Activated CD4-positive, alpha-beta T cell treated with anti-CD3 and anti-CD28 coated beads for 36 hours (primary cell): ENCODE measurements at regions of chr1 and their contacts with region 1.

Region 1: GRCh38 chr1:203267347-203267846 is 37.9 kb upstream of the BTG2 start:
- DNase-seq: peak; percentile 87
- ATAC-seq: peak; percentile 58
- H3K4me3 Mint-ChIP-seq: peak overlapping the region; percentile 79
- H3K27ac Mint-ChIP-seq: peak overlapping the region; percentile 53
- H3K4me1 Mint-ChIP-seq: peaks cover 22% of the 10 kb centered on the region
- H3K27me3 Mint-ChIP-seq: no peaks in the 10 kb centered on the region

Region 2: GRCh38 chr1:203038891-203039608 is 228.3 kb before region 1 on chr1:
- CTCF ChIA-PET with region 1: interaction called, 17 read pairs
- POLR2A ChIA-PET with region 1: no interaction called
- intact Hi-C with region 1: loop called (anchors 1 to 2 kb)
- DNase-seq: peak; percentile 77
- ATAC-seq: peak; percentile 85
- H3K4me3 Mint-ChIP-seq: no peak overlapping the region
- H3K27ac Mint-ChIP-seq: no peak overlapping the region
- H3K4me1 Mint-ChIP-seq: peaks cover 4% of the 10 kb centered on the region
- H3K27me3 Mint-ChIP-seq: peaks cover 4% of the 10 kb centered on the region

Region 3: DNA sequence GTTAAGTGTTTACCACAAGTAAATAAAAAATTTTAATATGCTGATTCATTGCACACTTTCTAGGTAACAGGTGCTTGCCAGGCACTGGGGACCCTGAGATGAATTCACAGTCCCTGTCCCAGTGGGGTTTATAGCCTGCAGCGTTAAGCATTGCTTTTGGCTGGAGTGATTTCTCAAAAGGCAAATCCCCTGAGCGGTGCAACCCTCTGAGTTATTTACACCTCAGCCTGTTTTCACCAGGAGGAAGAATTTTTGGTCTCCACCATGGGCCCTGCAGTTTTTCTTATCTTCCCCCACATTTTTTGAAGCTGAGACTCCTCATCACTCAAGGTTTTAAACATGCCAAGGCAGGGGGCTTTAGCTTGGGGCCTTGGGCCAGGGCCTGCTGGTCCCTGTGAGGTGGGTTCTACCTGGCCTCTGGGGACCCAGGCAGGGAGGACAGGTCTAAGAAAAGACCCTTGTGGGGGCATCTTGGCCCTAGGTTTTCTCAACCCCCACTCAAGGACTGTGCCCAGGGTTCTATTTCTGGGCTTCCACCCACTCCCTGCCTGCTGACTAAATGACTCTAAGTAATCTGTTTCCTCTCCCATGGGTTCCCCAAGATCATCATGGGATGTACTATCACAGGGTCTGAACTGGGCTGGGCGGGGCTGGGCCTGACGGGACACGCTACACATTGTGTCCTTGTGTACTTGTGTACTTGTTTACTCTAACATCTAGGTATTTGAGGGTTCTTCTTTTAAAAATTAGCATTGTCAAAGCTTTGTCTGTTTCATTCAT is 27.7 kb before region 1 on chr1:
- CTCF ChIA-PET with region 1: interaction called, 12 read pairs
- POLR2A ChIA-PET with region 1: interaction called, 5 read pairs
- intact Hi-C with region 1: no loop called
- DNase-seq: no peak
- ATAC-seq: no peak
- H3K4me3 Mint-ChIP-seq: no peak overlapping the region
- H3K27ac Mint-ChIP-seq: no peak overlapping the region
- H3K4me1 Mint-ChIP-seq: no peaks in the 10 kb centered on the region
- H3K27me3 Mint-ChIP-seq: peaks cover 20% of the 10 kb centered on the region

Region 4: GRCh38 chr1:203299169-203299568 is 31.8 kb after region 1 on chr1:
- CTCF ChIA-PET with region 1: interaction called, 150 read pairs
- POLR2A ChIA-PET with region 1: no interaction called
- intact Hi-C with region 1: no loop called
- DNase-seq: no peak
- ATAC-seq: peak; percentile 19
- H3K4me3 Mint-ChIP-seq: no peak overlapping the region
- H3K27ac Mint-ChIP-seq: no peak overlapping the region
- H3K4me1 Mint-ChIP-seq: peaks cover 56% of the 10 kb centered on the region
- H3K27me3 Mint-ChIP-seq: no peaks in the 10 kb centered on the region

Region 5: GRCh38 chr1:203340112-203340804 is 72.9 kb after region 1 on chr1:
- CTCF ChIA-PET with region 1: interaction called, 710 read pairs
- POLR2A ChIA-PET with region 1: interaction called, 6 read pairs
- intact Hi-C with region 1: loop called in 1 of 2 experiments (anchors 1 kb)
- DNase-seq: peak; percentile 75
- ATAC-seq: peak; percentile 76
- H3K4me3 Mint-ChIP-seq: no peak overlapping the region
- H3K27ac Mint-ChIP-seq: no peak overlapping the region
- H3K4me1 Mint-ChIP-seq: peaks cover 27% of the 10 kb centered on the region
- H3K27me3 Mint-ChIP-seq: peaks cover 7% of the 10 kb centered on the region

Region 6: GRCh38 chr1:203486618-203487370 is 219.4 kb after region 1 on chr1:
- CTCF ChIA-PET with region 1: interaction called, 48 read pairs
- POLR2A ChIA-PET with region 1: no interaction called
- intact Hi-C with region 1: loop called (anchors 1 kb)
- DNase-seq: no peak
- ATAC-seq: no peak
- H3K4me3 Mint-ChIP-seq: peak overlapping the region; percentile 56
- H3K27ac Mint-ChIP-seq: no peak overlapping the region
- H3K4me1 Mint-ChIP-seq: peaks cover 7% of the 10 kb centered on the region
- H3K27me3 Mint-ChIP-seq: no peaks in the 10 kb centered on the region

Region 7: GRCh38 chr1:204128964-204129896 is 861.8 kb after region 1 on chr1:
- CTCF ChIA-PET with region 1: no interaction called
- POLR2A ChIA-PET with region 1: no interaction called
- intact Hi-C with region 1: loop called in 1 of 2 experiments (anchors 5 kb)
- DNase-seq: peak; percentile 82
- ATAC-seq: peak; percentile 88
- H3K4me3 Mint-ChIP-seq: no peak overlapping the region
- H3K27ac Mint-ChIP-seq: no peak overlapping the region
- H3K4me1 Mint-ChIP-seq: peaks cover 5% of the 10 kb centered on the region
- H3K27me3 Mint-ChIP-seq: no peaks in the 10 kb centered on the region